CD4-positive, alpha-beta memory T cell (primary cell): ENCODE measurements at regions of chr11 and their contacts with region 1.

Region 1: GRCh38 chr11:85664615-85665481 is at the start of gene CREBZF:
- DNase-seq: peak; percentile 90 to 93 (median 92)
- H3K4me3 ChIP-seq: peak within 1 kb of the TSS; percentile 45 to 87
- H3K4me3 Mint-ChIP-seq: peak within 1 kb of the TSS; percentile 98 to 100 (median 100)
- H3K27ac ChIP-seq: peak within 1 kb of the TSS; percentile 96
- H3K27ac Mint-ChIP-seq: peak within 1 kb of the TSS; percentile 99 to 100 (median 100)
- H3K4me1 ChIP-seq: peaks cover 43% of the 10 kb centered on the region
- H3K4me1 Mint-ChIP-seq: peaks cover 29 to 58% (median 36%) of the 10 kb centered on the region in 4 donors
- H3K27me3 ChIP-seq: no peaks in the 10 kb centered on the region
- H3K27me3 Mint-ChIP-seq: no peaks in the 10 kb centered on the region
- total RNA-seq, gene CREBZF: 103 to 105 TPM

Region 2: DNA sequence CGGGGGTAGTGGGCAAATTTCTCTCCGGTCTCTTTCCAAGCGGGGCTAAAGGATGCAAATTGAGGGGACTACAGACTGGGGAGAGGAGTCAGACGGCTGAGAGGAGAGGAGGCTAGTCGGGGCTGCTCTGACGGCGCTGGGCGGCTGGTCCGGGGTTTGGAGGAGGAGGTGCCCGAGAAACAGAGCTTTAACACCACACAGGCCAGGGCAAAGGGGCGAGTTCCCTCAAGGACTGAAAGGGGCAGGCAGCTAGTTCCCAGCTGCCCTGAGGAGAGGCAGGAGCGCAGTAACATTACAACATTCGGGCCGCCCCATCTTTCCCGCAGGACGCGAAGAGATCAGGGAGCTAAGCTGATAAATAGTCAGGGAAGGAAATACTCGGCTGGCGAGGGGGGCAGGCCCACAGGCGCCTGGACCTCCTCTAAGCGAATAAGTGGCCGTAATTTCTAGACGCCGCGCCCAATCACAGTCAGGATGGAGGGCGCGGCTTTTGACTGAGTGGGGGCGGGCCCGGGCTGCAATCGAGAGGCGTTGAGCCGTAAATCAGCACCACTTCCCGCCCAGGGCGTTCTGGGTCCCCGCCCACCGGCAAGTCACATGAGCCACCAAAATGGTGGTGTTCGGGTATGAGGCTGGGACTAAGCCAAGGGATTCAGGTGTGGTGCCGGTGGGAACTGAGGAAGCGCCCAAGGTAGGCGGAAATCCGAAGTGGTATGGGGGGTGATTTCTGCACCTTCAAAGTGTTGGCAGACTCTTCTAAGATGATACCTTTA is 36.7 kb before region 1 on chr11 and contains the start of gene TMEM126B:
- CTCF ChIA-PET with region 1: interaction called, 7 read pairs
- POLR2A ChIA-PET with region 1: interaction called, 68 read pairs
- intact Hi-C with region 1: loop called (anchors 1 kb)
- DNase-seq: peak; percentile 92 to 97 (median 94)
- H3K4me3 ChIP-seq: peak within 1 kb of the TSS; percentile 58 to 73
- H3K4me3 Mint-ChIP-seq: peak within 1 kb of the TSS; percentile 93 to 99 (median 98)
- H3K27ac ChIP-seq: peak within 1 kb of the TSS; percentile 82
- H3K27ac Mint-ChIP-seq: peak within 1 kb of the TSS; percentile 91 to 99 (median 97)
- H3K4me1 ChIP-seq: peaks cover 30% of the 10 kb centered on the region
- H3K4me1 Mint-ChIP-seq: peaks cover 27 to 47% (median 36%) of the 10 kb centered on the region in 4 donors
- H3K27me3 ChIP-seq: no peaks in the 10 kb centered on the region
- H3K27me3 Mint-ChIP-seq: peaks cover 0 to 2% of the 10 kb centered on the region in 2 donors
- total RNA-seq, gene TMEM126B: 40.9 to 46.8 TPM

Region 3: GRCh38 chr11:85652786-85653447 is 11.9 kb before region 1 on chr11:
- CTCF ChIA-PET with region 1: interaction called, 25 read pairs
- POLR2A ChIA-PET with region 1: interaction called, 169 read pairs
- intact Hi-C with region 1: loop called (anchors 1 kb)
- DNase-seq: no peak
- H3K4me3 ChIP-seq: no peak overlapping the region
- H3K4me3 Mint-ChIP-seq: no peak overlapping the region
- H3K27ac ChIP-seq: no peak overlapping the region
- H3K27ac Mint-ChIP-seq: peak overlapping the region in 3 of 7 donors; percentile 5 to 78 (median 71)
- H3K4me1 ChIP-seq: peaks cover 18% of the 10 kb centered on the region
- H3K4me1 Mint-ChIP-seq: peaks cover 22 to 29% (median 26%) of the 10 kb centered on the region in 4 donors
- H3K27me3 ChIP-seq: no peaks in the 10 kb centered on the region
- H3K27me3 Mint-ChIP-seq: no peaks in the 10 kb centered on the region

Region 4: GRCh38 chr11:85752890-85753581 is 88.2 kb after region 1 on chr11:
- CTCF ChIA-PET with region 1: no interaction called
- POLR2A ChIA-PET with region 1: interaction called, 22 read pairs
- intact Hi-C with region 1: loop called (anchors 1 kb)
- DNase-seq: peak; percentile 97 to 98 (median 98)
- H3K4me3 ChIP-seq: peak overlapping the region; percentile 0 to 50
- H3K4me3 Mint-ChIP-seq: peak overlapping the region; percentile 73 to 93 (median 80)
- H3K27ac ChIP-seq: peak overlapping the region; percentile 60
- H3K27ac Mint-ChIP-seq: peak overlapping the region; percentile 97 to 99 (median 98)
- H3K4me1 ChIP-seq: peaks cover 88% of the 10 kb centered on the region
- H3K4me1 Mint-ChIP-seq: peaks cover 73 to 97% (median 86%) of the 10 kb centered on the region in 4 donors
- H3K27me3 ChIP-seq: no peaks in the 10 kb centered on the region
- H3K27me3 Mint-ChIP-seq: peaks cover 2 to 5% of the 10 kb centered on the region in 2 donors

Region 5: GRCh38 chr11:85826116-85826855 is 161.4 kb after region 1 on chr11:
- CTCF ChIA-PET with region 1: interaction called, 3 read pairs
- POLR2A ChIA-PET with region 1: interaction called, 29 read pairs
- intact Hi-C with region 1: loop called (anchors 1 kb)
- DNase-seq: peak in 2 of 5 donors; percentile 18 to 29
- H3K4me3 ChIP-seq: no peak overlapping the region
- H3K4me3 Mint-ChIP-seq: peak overlapping the region in 7 of 8 donors; percentile 4 to 76 (median 18)
- H3K27ac ChIP-seq: peak overlapping the region; percentile 6
- H3K27ac Mint-ChIP-seq: peak overlapping the region; percentile 82 to 99 (median 97)
- H3K4me1 ChIP-seq: peaks cover 74% of the 10 kb centered on the region
- H3K4me1 Mint-ChIP-seq: peaks cover 58 to 77% (median 63%) of the 10 kb centered on the region in 4 donors
- H3K27me3 ChIP-seq: no peaks in the 10 kb centered on the region
- H3K27me3 Mint-ChIP-seq: no peaks in the 10 kb centered on the region

Region 6: DNA sequence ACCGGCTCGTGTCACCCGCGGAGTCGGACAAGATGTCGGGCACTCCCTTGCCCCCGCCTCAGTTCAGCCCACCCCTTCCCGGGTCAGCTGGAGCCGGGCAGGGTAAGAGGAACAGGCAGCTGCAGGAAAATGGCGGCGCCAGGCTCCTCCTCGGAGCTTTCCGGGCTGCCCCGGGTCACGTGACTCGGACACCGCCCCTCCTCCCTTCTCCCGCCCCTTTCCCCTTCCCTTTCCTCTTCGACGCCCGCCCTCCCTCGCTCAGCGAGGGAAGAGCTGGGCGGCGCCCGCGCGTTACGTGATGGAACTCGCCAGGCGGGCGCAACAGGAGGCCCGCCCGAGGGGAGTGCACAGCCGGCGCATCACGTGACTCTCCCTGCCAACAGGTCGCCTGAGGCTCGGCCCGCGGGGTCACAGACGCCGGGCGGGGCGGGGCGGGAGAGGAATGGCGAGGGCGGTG is 404.1 kb after region 1 on chr11 and contains the start of gene PICALM:
- CTCF ChIA-PET with region 1: no interaction called
- POLR2A ChIA-PET with region 1: interaction called, 6 read pairs
- intact Hi-C with region 1: loop called (anchors 2 kb)
- DNase-seq: peak; percentile 94 to 97 (median 97)
- H3K4me3 ChIP-seq: peak within 1 kb of the TSS; percentile 34 to 92
- H3K4me3 Mint-ChIP-seq: peak within 1 kb of the TSS; percentile 93 to 99 (median 98)
- H3K27ac ChIP-seq: peak within 1 kb of the TSS; percentile 81
- H3K27ac Mint-ChIP-seq: peak within 1 kb of the TSS; percentile 89 to 98 (median 96)
- H3K4me1 ChIP-seq: peaks cover 32% of the 10 kb centered on the region
- H3K4me1 Mint-ChIP-seq: peaks cover 18 to 46% (median 28%) of the 10 kb centered on the region in 4 donors
- H3K27me3 ChIP-seq: no peaks in the 10 kb centered on the region
- H3K27me3 Mint-ChIP-seq: peaks cover 0 to 2% of the 10 kb centered on the region in 2 donors
- total RNA-seq, gene PICALM: 127 to 138 TPM

Region 7: GRCh38 chr11:86302100-86302793 is 637.4 kb after region 1 on chr11 and contains the start of gene HIKESHI:
- CTCF ChIA-PET with region 1: no interaction called
- POLR2A ChIA-PET with region 1: no interaction called
- intact Hi-C with region 1: loop called (anchors 1 kb)
- DNase-seq: peak; percentile 83 to 95 (median 84)
- H3K4me3 ChIP-seq: peak within 1 kb of the TSS; percentile 54 to 85
- H3K4me3 Mint-ChIP-seq: peak within 1 kb of the TSS; percentile 94 to 100 (median 100)
- H3K27ac ChIP-seq: peak within 1 kb of the TSS; percentile 87
- H3K27ac Mint-ChIP-seq: peak within 1 kb of the TSS; percentile 93 to 100 (median 99)
- H3K4me1 ChIP-seq: peaks cover 24% of the 10 kb centered on the region
- H3K4me1 Mint-ChIP-seq: peaks cover 12 to 29% (median 23%) of the 10 kb centered on the region in 4 donors
- H3K27me3 ChIP-seq: no peaks in the 10 kb centered on the region
- H3K27me3 Mint-ChIP-seq: peaks cover 0 to 1% of the 10 kb centered on the region in 2 donors
- total RNA-seq, gene HIKESHI: 26.6 to 33.3 TPM